A673 (cell line): ENCODE measurements at regions of chr1 and their contacts with region 1.

Region 1: DNA sequence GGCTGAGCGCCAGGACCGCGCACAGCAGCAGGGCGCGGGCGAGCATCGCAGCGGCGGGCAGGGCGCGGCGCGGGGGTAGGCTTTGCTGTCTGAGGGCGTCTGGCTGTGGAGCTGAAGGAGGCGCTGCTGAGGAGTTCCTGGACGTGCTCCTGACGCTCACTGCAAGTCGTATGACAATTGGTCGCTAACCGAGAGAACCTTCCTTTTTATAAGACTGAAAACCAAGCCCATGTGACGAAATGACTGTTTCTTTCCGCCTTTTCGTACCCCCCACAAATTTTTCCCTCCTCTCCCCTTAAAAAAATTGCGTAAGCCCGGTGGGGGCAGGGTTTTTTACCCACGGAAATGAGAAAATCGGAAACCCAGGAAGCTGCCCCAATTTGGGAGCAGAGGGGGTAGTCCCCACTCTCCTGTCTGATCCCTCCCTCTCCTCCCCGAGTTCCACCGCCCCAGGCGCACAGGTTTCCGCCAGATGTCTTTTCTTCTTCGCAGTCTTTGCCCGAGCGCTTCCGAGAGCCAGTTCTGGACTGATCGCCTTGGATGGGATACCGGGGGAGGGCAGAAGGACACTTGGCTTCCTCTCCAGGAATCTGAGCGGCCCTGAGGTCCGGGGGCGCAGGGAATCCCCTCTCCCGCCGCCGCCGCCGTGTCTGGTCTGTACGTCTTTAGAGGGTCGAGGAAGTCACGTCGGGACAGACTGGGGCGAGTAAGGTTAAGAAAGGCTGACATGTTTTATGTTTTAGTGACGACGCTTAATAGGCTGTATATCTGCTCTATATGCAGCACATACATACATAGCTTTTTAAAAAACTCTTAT is at the start of gene PTGS2:
- DNase-seq: peak; percentile 96
- H3K4me3 ChIP-seq: peak within 1 kb of the TSS; percentile 81
- H3K27ac ChIP-seq: peak within 1 kb of the TSS; percentile 92
- H3K4me1 ChIP-seq: peaks cover 21% of the 10 kb centered on the region
- H3K27me3 ChIP-seq: no peaks in the 10 kb centered on the region
- CTCF ChIP-seq: peak; percentile 78
- total RNA-seq, gene PTGS2: 4.3 and 5.8 TPM in 2 replicates

Region 2: DNA sequence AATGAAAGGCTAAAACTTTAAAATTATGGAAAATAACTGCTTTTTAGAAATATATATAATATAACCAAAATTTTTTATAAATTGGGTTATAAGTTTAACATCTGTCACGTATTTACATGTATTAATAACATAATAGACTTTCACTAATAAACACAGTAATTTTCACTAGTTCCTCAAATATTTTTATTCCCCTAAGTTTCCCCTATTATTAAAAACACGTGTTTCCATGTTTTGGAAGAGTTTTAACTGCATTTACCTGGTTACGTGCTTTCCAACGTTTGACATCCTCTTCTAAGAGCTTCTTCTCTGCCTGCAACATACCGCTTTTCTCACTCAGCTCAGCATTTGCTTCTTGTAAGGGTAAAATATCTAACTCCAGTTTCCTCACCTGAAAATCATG is 339.7 kb before region 1 on chr1:
- CTCF ChIA-PET with region 1: no interaction called
- POLR2A ChIA-PET with region 1: no interaction called
- intact Hi-C with region 1: no loop called
- DNase-seq: no peak
- H3K4me3 ChIP-seq: no peak overlapping the region
- H3K27ac ChIP-seq: no peak overlapping the region
- H3K4me1 ChIP-seq: no peaks in the 10 kb centered on the region
- H3K27me3 ChIP-seq: no peaks in the 10 kb centered on the region
- CTCF ChIP-seq: no peak

Region 3: DNA sequence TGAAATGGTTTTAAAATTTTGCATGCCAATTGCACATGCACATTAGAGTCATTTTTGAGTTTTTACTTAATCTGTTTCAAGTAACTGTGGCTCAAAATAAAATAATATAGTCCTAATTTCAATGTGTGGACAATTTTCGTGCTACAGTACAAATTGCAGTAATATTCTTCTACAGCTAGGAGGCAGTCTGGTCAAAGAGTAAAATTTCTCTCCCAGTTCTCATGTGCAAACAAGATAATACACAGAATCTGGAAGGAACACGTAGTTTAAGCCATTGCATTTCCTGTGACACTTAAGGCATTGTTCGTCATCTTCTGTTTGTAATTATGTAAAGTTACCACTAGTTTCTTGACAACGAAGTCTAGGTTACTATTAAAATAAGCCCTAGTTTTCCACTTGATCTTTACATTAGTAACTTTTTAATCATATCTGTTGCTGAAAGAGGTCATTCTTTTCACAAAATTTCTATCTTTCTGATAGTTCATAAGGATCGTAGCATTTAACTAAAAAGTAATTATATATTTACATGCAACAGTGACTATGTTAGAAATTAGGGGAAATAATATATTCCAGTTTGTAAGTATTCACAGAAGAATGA is 275.9 kb before region 1 on chr1:
- CTCF ChIA-PET with region 1: no interaction called
- POLR2A ChIA-PET with region 1: no interaction called
- intact Hi-C with region 1: loop called (anchors 5 kb)
- DNase-seq: peak; percentile 90
- H3K4me3 ChIP-seq: no peak overlapping the region
- H3K27ac ChIP-seq: no peak overlapping the region
- H3K4me1 ChIP-seq: peaks cover 6% of the 10 kb centered on the region
- H3K27me3 ChIP-seq: no peaks in the 10 kb centered on the region
- CTCF ChIP-seq: peak; percentile 89